ENCODE measurements at regions of chr20 and their contacts with region 1.

Region 1: DNA sequence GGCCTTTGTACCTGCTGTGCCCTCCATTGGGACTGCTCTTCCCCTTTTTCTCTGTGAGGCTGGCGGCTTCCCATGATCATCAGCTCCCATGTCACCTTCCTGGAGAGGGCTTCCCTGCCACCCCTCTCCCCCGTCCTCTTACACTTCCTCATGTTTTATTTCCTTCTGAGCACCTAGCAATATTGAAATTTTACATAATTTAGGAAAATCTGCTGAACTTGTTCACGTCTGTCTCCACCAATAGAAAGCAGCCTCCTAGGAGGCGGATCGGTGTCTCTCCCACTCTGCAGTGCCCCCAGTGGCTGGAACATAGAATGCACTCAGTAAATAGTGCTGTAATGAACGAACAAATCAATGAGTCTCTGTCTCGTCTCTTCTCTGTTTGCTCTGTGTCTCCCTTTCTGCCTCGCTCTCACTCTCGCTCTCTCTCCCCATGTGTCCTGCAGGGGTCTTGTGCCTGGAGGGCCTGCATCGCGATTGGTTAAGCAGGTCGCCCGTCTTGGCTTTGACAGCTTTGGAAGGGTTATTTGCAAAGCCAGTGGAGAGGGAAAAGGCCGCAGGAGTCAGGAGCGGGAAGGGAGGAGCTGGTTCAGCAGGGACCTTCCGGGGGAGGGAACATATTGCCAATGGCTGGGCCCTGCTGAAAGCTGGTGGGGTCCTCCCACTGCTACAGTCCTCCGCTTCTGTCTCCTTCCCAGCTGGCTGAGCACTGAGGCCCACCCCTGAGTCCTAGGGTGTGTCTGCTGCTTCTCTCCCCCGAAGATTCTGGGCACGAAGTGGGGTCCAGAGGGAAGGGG is 12.1 kb upstream of the OCSTAMP start:
- DNase-seq: peak; percentile 82
- ATAC-seq: peak; percentile 66
- H3K4me3 Mint-ChIP-seq: no peak overlapping the region
- H3K27ac Mint-ChIP-seq: no peak overlapping the region
- H3K4me1 Mint-ChIP-seq: peaks cover 18% of the 10 kb centered on the region
- H3K27me3 Mint-ChIP-seq: peaks cover 13% of the 10 kb centered on the region

Region 2: DNA sequence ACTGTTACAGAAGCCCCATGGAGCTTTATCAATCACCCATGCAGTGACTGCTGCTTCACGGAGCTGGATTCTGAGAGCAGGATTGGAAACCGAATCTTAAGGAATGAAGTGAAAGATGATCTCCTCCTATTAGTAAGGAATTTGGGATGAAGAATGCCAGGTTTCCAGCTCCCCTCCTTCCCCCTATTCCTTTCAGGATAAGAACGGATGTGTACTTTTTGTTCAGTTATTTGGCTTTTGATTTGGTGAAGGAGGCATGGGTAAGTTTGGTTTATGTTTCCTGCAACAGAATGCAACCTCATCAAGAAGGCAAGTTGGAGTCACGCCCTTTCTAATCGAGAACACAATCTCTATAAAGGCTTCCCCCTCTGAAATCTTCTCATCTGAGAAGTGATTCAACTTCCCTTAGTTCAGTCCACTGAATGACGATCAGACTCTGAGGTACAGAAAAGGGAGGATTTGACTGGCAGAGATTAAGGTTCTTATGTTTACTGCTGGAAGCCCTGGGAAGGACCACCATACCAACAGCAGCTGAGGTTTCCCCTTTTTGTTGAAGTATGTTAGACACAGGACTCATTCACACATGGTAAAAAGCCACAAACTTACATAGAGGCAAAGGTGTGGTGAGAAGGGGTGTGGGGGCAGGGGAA is 161.6 kb before region 1 on chr20:
- CTCF ChIA-PET with region 1: interaction called, 3 read pairs
- POLR2A ChIA-PET with region 1: no interaction called
- intact Hi-C with region 1: loop called in 1 of 2 experiments (anchors 5 kb)
- DNase-seq: peak; percentile 41
- ATAC-seq: peak; percentile 87
- H3K4me3 Mint-ChIP-seq: peak overlapping the region; percentile 37
- H3K27ac Mint-ChIP-seq: peak overlapping the region; percentile 80
- H3K4me1 Mint-ChIP-seq: peaks cover 64% of the 10 kb centered on the region
- H3K27me3 Mint-ChIP-seq: no peaks in the 10 kb centered on the region

Region 3: DNA sequence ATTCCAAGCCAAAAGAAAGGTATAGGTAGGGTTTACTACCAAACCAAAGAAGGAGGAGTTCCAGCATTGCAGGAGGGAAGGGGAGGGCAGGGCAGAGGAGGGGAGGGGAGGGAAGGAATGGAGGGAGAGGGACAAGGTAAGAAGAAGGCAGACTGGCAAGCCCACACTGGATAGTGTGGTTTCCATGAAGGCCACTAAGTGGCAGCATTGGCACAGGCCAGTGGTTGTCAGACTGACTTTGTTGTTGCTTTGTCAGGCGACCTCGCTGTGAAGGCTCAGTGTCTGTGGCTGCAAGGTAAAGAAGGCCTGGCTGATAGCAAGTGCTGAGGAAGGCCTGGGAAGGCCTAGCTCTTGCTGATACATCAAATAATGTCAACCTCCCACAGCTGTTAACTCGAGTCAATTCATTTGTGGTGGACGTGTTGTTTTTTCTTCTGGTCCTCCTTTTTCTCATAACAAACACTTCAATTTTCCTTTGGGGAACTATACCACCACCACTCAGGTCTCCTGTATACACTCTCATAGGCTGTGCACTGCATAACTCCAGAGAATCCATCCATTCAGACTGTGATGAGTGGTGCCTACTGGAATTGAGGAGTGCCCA is 41.5 kb before region 1 on chr20:
- CTCF ChIA-PET with region 1: interaction called, 12 read pairs
- POLR2A ChIA-PET with region 1: no interaction called
- intact Hi-C with region 1: loop called in 1 of 2 experiments (anchors 2 kb)
- DNase-seq: peak; percentile 69
- ATAC-seq: peak; percentile 95
- H3K4me3 Mint-ChIP-seq: no peak overlapping the region
- H3K27ac Mint-ChIP-seq: no peak overlapping the region
- H3K4me1 Mint-ChIP-seq: no peaks in the 10 kb centered on the region
- H3K27me3 Mint-ChIP-seq: peaks cover 21% of the 10 kb centered on the region

Region 4: DNA sequence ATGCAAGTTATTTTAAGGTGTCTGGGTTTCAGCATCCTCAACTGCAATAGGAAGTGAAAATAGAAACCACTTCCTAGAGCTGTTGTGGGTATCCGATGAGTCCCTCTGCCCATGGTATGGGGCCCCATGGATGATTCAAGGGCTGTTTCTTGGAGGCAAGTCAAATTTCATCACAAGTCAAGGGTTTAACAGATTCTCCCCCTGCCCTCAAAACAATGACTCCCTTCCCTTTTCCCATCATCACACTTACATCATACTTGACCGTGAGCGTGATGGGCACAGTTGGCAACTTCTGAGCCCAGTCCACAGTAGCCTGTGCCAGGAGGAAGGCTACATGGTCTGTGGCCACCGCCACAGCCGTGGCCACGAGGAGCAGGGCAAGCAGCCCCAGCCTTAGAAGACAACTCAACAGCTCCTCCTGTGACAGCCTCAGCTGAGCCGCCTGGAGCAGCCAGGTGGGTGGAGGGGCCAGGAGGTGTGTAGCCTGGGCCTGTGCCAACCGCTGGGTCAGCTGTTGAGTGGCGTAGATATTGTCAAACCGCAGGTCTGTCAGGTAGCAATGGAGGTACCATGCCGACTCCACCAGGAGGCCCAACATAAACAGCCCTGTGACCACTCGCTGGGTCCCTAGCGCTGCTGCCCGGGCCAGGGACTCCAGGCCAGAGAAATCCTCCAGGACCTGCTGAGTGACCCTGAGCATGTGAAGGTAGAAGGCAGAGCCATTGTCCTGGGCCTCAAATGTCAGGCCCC is 17.3 kb before region 1 on chr20:
- CTCF ChIA-PET with region 1: interaction called, 11 read pairs
- POLR2A ChIA-PET with region 1: interaction called, 3 read pairs
- intact Hi-C with region 1: loop called in 1 of 2 experiments (anchors 1 kb)
- DNase-seq: peak; percentile 75
- ATAC-seq: peak; percentile 82
- H3K4me3 Mint-ChIP-seq: peak overlapping the region; percentile 47
- H3K27ac Mint-ChIP-seq: peak overlapping the region; percentile 91
- H3K4me1 Mint-ChIP-seq: peaks cover 10% of the 10 kb centered on the region
- H3K27me3 Mint-ChIP-seq: peaks cover 12% of the 10 kb centered on the region

Region 5: GRCh38 chr20:46681032-46681854 is 118.7 kb after region 1 on chr20:
- CTCF ChIA-PET with region 1: interaction called, 3 read pairs
- POLR2A ChIA-PET with region 1: no interaction called
- intact Hi-C with region 1: loop called in 1 of 2 experiments (anchors 1 kb)
- DNase-seq: peak; percentile 83
- ATAC-seq: peak; percentile 80
- H3K4me3 Mint-ChIP-seq: no peak overlapping the region
- H3K27ac Mint-ChIP-seq: no peak overlapping the region
- H3K4me1 Mint-ChIP-seq: peaks cover 29% of the 10 kb centered on the region
- H3K27me3 Mint-ChIP-seq: no peaks in the 10 kb centered on the region

Measured in activated CD4-positive, alpha-beta T cell treated with anti-CD3 and anti-CD28 coated beads for 36 hours (primary cell).